K562 (cell line): ENCODE measurements at regions of chr20 and their contacts with region 1.

Region 1: DNA sequence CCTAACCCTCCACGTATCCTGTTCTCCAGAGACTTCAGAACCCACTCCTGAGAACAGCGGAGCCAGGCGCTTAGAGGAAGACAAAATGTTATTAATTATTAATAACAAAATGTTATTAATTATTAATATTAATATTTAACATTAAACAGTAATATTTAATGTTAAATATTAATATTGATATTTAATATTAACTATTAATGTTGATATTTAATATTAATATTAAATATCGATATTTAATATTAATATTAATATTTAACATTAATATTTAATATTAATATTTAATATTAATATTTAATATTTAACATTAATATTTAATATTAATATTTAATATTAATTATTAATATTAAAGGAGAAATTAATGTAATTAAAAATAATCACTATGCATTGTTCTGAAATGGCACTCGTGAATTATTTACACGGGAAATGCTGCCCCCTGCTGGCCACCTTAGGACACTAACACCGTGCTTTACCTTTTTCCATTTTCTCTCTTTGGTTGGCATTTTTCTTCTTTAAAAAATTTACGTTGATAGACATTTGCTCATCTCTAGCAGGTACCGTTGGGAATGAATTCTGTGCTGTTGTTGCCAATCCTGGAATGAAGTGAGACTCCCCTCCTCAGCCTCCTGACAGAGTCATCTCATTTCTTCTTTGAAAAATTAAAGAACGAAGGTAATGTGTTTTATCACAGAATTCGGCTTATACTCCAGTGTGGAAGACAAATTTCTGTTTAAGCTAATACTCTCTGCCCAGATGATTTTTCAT is 7.5 kb upstream of the GGTLC1 start:
- DNase-seq: peak; percentile 18 to 59 (median 34)
- ATAC-seq: no peak; the same call in 1 of the 3 replicates
- H3K4me3 ChIP-seq: no peak overlapping the region
- H3K27ac ChIP-seq: no peak overlapping the region
- H3K4me1 ChIP-seq: no peaks in the 10 kb centered on the region
- H3K27me3 ChIP-seq: no peaks in the 10 kb centered on the region
- CTCF ChIP-seq: peak; percentile 44 to 62 (median 46); a peak in 4 of 6 replicates
- EP300 ChIP-seq: no peak
- POLR2A ChIP-seq: no peak
- RAD21 ChIP-seq: peak; percentile 19 to 31; a peak in 3 of 4 replicates

Region 2: GRCh38 chr20:23889775-23890211 is 106.3 kb before region 1 on chr20:
- CTCF ChIA-PET with region 1: interaction called, 3 read pairs
- POLR2A ChIA-PET with region 1: no interaction called
- in situ Hi-C with region 1: loop called (anchors 10 kb)
- intact Hi-C with region 1: loop called (anchors 5 kb)
- DNase-seq: peak; percentile 33 to 65 (median 44)
- ATAC-seq: peak; percentile 94
- H3K4me3 ChIP-seq: no peak overlapping the region
- H3K27ac ChIP-seq: no peak overlapping the region
- H3K4me1 ChIP-seq: no peaks in the 10 kb centered on the region
- H3K27me3 ChIP-seq: no peaks in the 10 kb centered on the region
- CTCF ChIP-seq: peak; percentile 65 to 69 (median 66)
- EP300 ChIP-seq: no peak
- POLR2A ChIP-seq: no peak
- RAD21 ChIP-seq: peak; percentile 55 to 69

Region 3: DNA sequence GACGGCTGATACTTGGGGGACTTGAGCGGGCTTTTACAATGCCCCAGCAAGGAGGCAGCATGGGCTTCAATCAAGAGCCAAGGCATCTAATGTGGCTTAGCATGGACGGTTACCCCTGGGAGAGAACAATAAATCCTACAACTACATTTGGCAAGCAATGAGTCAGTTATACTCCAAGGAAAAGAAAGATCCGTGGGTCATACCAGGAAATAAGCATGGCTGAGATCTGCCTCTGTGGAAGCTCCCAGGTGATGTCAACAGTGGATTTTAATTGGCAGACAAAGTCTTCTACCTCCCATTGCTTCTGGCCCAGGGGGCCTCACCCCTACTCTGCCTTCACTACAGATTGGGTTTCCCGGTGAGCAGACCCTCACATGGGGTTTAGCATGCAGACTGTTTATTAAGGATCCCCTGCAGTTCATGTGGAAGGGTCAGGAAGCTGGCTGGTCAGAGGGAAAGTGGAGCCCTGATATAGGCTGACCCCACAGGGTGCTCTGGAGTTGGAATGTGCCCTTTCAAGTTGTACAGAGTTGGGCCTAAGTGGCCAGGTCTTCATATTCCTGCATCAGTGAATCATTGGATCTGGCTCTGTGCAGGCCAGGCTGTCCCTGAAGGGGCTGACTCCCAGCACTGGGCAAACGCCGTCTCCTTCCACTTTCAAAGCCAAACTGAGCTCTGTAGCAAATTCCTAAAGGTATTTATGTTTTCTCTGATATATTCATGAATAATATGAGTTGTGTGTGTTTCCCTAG is 83.8 kb after region 1 on chr20:
- CTCF ChIA-PET with region 1: no interaction called
- POLR2A ChIA-PET with region 1: no interaction called
- in situ Hi-C with region 1: no loop called
- intact Hi-C with region 1: no loop called
- DNase-seq: no peak
- ATAC-seq: no peak
- H3K4me3 ChIP-seq: no peak overlapping the region
- H3K27ac ChIP-seq: no peak overlapping the region
- H3K4me1 ChIP-seq: no peaks in the 10 kb centered on the region
- H3K27me3 ChIP-seq: no peaks in the 10 kb centered on the region
- CTCF ChIP-seq: no peak
- EP300 ChIP-seq: no peak
- POLR2A ChIP-seq: no peak
- RAD21 ChIP-seq: no peak